Activated CD4-positive, alpha-beta T cell treated with anti-CD3 and anti-CD28 coated beads, Interleukin-2, amount 10 ng/mL, durations not matched to agents 24 days and 14 days (primary cell): ENCODE measurements at regions of chr11 and their contacts with region 1.

Region 1: DNA sequence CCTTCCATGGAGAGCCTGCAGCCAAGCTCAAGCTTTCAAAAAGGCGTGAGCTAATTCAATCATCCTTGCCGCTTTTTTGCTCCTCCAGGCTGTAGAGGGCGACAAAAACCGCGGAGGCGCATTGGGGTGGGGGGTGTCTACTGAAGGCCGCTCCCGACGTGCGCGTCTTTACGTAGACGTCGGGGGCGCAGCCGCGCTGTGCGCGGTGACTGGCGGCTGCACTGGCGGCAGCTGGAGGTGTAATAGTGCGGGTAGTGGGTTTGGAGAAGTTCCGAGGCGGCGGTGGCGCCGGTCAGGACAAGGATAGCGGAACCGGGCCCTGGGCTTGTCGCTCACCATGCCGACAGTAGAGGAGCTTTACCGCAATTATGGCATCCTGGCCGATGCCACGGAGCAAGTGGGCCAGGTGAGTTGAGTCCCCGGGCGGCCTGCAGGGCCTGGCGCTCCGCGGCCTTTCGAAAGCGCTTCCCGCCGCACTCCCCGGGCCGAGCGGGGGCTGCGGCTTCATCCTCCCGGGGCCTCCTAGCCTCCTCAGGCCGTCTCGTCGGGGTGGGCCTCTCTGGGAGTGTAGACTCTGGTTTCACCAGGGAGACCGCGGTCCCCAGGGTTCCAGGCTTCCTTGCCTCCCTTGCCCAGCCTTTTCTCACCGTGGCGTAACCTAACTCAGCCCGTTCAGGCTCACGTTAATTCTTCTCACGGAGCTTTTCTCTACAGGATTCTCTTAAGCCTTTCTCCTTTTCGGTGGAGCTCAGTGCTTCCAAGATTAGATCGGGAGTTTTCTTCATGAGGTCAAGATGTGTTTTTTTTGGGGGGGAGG is at the start of gene API5:
- DNase-seq: peak; percentile 98
- H3K4me3 Mint-ChIP-seq: peak within 1 kb of the TSS; percentile 92
- H3K27ac Mint-ChIP-seq: peak within 1 kb of the TSS; percentile 92
- H3K4me1 Mint-ChIP-seq: peaks cover 33% of the 10 kb centered on the region
- H3K27me3 Mint-ChIP-seq: no peaks in the 10 kb centered on the region
- total RNA-seq, gene API5: 171 and 182 TPM in 2 replicates

Region 2: DNA sequence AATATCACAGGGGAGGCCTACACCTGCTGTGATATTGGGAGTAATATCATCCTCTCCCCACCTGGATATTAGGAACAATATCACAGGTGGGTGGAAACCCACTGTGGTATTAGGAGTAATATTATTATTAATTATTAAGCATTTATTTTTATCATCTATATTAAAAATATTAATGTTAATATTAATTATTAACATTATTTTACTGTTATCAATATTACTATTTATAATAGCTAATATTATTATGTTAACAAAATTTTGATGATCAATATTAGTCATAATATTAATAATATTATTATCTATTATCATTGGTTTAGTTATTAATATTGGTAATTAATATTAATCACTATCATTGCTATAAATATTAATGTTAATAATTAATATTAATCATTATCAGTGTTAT is 161.3 kb before region 1 on chr11:
- intact Hi-C with region 1: loop called (anchors 5 kb)
- DNase-seq: no peak
- H3K4me3 Mint-ChIP-seq: no peak overlapping the region
- H3K27ac Mint-ChIP-seq: no peak overlapping the region
- H3K4me1 Mint-ChIP-seq: peaks cover 5% of the 10 kb centered on the region
- H3K27me3 Mint-ChIP-seq: no peaks in the 10 kb centered on the region

Region 3: DNA sequence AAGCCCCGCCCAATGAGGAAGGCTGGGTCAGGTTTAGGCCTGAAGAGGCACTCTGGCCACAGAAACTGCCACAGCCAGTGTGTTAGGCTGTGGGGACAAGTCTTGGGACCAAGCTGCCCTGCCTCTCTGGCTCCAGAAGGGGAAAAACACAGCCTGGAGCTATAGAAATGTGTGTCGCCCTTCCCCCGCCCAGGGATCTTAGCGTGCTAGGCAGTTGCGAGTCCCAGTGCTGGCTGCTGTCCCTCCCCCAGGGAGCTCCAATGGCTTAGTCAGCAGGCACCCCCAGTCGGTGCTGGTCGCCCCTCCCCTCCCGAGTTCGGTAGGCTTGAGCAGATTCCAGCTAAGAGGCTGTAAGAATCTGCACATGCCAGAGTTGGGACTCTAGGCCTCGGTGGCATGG is 99.7 kb before region 1 on chr11:
- intact Hi-C with region 1: no loop called
- DNase-seq: no peak
- H3K4me3 Mint-ChIP-seq: no peak overlapping the region
- H3K27ac Mint-ChIP-seq: no peak overlapping the region
- H3K4me1 Mint-ChIP-seq: no peaks in the 10 kb centered on the region
- H3K27me3 Mint-ChIP-seq: no peaks in the 10 kb centered on the region

Region 4: DNA sequence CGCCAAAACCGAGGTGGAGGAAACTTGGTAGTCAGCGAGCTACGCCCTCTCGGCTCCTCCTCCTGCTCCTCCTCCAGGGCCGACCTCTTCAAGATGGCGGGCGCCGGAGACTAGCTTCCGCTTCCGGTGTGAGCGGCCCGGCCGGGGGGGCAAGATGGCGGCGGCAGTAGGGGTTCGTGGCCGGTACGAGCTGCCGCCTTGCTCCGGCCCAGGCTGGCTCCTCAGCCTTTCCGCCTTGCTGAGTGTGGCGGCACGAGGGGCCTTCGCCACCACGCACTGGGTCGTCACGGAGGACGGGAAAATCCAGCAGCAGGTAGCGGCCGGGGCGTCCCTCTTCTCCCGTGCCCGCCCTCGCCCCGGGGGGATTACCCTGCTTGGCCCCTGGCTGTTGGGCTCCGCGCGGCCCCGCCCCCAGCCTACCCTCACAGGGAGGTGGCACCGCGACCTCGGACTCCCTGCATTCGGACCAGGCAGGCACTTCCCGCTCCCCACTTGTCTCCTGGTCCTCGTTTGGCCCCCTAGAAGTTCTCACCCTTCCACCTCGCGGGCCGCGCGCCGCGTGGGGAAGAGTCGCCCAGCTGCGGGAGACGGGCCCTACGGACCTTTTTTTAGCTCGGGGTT is 46.9 kb after region 1 on chr11 and contains the start of gene TTC17:
- intact Hi-C with region 1: loop called (anchors 1 kb)
- DNase-seq: peak; percentile 98
- H3K4me3 Mint-ChIP-seq: peak within 1 kb of the TSS; percentile 99
- H3K27ac Mint-ChIP-seq: peak within 1 kb of the TSS; percentile 97
- H3K4me1 Mint-ChIP-seq: peaks cover 29% of the 10 kb centered on the region
- H3K27me3 Mint-ChIP-seq: no peaks in the 10 kb centered on the region
- total RNA-seq, gene TTC17: 64.9 and 75.1 TPM in 2 replicates

Region 5: GRCh38 chr11:43419460-43419859 is 107.5 kb after region 1 on chr11:
- intact Hi-C with region 1: loop called (anchors 1 kb)
- DNase-seq: peak; percentile 82
- H3K4me3 Mint-ChIP-seq: no peak overlapping the region
- H3K27ac Mint-ChIP-seq: no peak overlapping the region
- H3K4me1 Mint-ChIP-seq: peaks cover 3% of the 10 kb centered on the region
- H3K27me3 Mint-ChIP-seq: no peaks in the 10 kb centered on the region

Region 6: DNA sequence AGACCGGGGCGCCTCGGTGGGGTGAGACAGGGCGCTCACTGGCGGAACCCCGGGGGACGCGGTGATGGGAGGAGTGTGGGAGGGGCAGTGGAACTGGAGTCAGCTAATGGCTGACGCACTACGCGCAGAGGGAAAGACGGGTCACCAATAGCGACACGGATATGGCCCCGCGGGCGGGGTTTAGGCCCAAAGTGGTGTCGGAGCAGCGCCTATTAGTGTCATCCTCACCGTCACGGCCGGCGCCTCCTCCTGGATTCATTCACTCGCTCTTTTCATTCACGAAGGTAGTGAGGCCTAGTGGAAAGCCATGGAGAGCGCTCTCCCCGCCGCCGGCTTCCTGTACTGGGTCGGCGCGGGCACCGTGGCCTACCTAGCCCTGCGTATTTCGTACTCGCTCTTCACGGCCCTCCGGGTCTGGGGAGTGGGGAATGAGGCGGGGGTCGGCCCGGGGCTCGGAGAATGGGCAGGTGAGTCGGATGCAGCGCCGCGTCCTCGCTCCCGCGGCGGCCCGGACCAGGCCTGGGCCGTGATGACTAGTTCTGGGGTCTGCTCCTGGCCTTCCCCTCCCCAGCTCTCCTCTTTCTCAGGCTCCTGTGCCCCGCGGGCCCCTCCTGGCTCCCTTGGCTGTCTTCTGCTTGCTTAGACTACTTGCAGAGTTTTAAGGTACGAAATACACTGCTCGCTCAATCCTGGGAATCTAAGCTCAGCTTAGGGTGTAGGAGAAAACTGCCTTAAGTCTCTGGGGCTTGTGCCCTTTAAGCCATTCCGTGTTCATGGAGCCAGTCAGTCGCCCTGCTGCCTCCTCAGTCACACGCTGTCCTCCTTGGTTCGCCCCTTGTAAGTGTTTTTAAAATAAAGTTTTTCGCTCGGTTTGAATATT is 368.8 kb after region 1 on chr11 and contains the start of gene HSD17B12:
- intact Hi-C with region 1: loop called (anchors 1 kb)
- DNase-seq: peak; percentile 100
- H3K4me3 Mint-ChIP-seq: peak within 1 kb of the TSS; percentile 98
- H3K27ac Mint-ChIP-seq: peak within 1 kb of the TSS; percentile 96
- H3K4me1 Mint-ChIP-seq: peaks cover 29% of the 10 kb centered on the region
- H3K27me3 Mint-ChIP-seq: peaks cover 12% of the 10 kb centered on the region
- total RNA-seq, gene HSD17B12: 70.8 and 80.1 TPM in 2 replicates

Region 7: DNA sequence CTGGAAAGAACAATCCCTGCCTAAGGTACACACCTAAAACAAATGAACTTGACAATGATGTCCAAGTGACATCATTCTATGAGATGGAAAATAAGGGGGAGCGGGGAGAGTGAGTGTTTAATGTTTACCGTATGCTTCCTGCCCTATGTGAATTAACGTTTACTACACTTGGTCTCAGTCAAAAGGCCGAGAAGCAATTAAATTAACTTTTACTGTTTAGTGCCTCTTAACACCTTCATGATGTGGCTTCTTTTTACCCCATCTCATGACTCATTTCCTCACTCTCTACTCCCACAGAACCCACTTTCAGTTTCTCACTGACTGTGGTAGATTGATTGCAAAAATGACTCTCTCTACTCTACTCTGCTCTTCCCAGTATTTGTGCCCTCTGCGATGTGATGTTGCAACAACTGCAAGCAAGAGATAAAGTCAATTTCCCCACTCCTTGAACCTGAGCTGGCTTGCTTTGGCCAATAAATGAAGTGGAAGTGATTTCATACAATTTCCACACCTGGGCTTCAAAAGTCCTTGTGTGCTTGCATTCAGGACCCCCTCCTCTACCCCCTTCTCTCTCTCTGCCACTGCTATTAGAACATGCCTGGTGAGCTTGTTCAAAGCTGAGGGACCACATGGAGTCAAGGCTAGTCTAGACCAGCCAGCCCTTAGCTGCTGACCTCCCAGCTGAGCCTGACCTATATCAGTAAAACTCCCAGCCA is 557.0 kb after region 1 on chr11:
- intact Hi-C with region 1: loop called (anchors 10 kb)
- DNase-seq: peak; percentile 89
- H3K4me3 Mint-ChIP-seq: peak overlapping the region; percentile 66
- H3K27ac Mint-ChIP-seq: peak overlapping the region; percentile 76
- H3K4me1 Mint-ChIP-seq: peaks cover 28% of the 10 kb centered on the region
- H3K27me3 Mint-ChIP-seq: peaks cover 60% of the 10 kb centered on the region